Left lung (tissue), 14 donors: ENCODE measurements at regions of chr19 and their contacts with region 1.

Region 1: GRCh38 chr19:18408053-18408476 is 10.6 kb upstream of the LRRC25 start:
- DNase-seq: peak in 1 of 4 donors; percentile 89
- ATAC-seq: peak; percentile 78
- H3K4me3 ChIP-seq: no peak overlapping the region
- H3K27ac ChIP-seq: no peak overlapping the region
- H3K4me1 ChIP-seq: peaks cover 0 to 26% of the 10 kb centered on the region in 2 donors
- H3K27me3 ChIP-seq: no peaks in the 10 kb centered on the region
- CTCF ChIP-seq: peak; percentile 41 to 63

Region 2: DNA sequence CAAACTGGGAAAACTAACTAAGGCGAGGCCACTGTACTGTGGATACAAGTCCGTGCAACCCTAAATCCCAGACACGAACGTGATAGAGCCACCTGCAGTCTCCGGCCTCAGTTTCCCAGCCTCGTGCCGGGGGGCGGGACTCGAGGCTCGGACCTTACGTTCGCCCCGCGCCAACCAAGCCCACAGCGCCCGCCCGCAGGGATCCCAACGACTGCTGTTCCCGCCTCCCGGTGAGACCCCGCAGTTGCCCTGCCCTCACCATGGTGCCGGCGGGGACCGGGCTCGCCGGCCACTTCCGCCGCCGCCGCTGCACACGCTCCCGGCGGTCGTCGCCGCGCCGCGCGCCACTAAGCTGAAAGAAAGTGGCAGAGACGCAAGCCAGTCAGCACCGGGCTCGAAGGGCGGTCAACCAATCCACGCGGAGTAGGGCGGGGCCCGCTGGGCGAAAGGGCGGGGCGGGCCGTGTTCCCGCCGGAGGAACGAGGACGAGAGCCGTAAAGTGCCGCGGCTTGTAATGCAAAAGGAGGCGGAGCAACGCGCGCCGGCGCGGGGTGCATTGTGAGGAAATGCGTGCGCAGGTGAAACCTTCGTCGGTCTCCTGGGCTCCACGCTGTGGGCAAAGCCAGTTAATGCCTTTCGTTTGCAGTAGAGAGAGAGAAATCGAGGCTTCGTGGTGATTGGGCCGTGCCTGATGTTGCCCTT is 85.2 kb before region 1 on chr19 and contains the start of gene LSM4:
- intact Hi-C with region 1: no loop called
- DNase-seq: peak; percentile 94 to 98 (median 98)
- ATAC-seq: peak; percentile 94
- H3K4me3 ChIP-seq: peak within 1 kb of the TSS; percentile 58 to 81
- H3K27ac ChIP-seq: peak within 1 kb of the TSS; percentile 81 to 91
- H3K4me1 ChIP-seq: peaks cover 32 to 60% of the 10 kb centered on the region in 2 donors
- H3K27me3 ChIP-seq: no peaks in the 10 kb centered on the region
- CTCF ChIP-seq: no peak
- polyA plus RNA-seq, gene LSM4: 72.7 to 95.5 (median 78.7) TPM

Region 3: DNA sequence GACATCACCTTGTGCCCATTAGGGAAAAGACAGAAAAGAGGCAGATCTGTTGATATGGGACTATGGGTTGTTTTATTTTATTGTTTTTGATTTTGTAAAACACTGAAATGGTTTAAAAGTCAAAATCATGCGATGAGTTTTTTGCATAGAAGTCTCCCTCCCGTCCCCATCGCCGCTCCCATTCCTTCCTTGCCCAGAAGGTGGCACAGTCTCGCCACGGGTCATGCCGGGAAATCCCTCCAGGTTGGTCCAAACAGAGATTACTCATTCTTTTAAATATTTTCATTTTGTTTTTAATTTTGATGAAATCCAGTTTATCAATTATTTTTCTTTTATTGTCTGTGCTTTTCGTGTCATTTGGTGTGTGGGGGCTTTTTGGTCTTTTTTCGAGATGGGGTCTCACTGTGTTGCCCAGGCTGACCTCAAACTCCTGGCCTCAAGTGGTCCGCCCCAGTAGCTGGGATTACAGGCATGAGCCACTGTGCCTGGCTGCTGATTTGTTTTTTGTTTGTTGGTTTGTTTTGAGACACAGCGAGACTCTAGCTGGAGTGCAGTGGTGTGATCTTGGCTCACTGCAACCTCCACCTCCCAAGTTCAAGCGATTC is 58.4 kb before region 1 on chr19:
- intact Hi-C with region 1: loop called (anchors 5 to 10 kb)
- DNase-seq: peak in 3 of 4 donors; percentile 46 to 89 (median 64)
- ATAC-seq: peak; percentile 91
- H3K4me3 ChIP-seq: no peak overlapping the region
- H3K27ac ChIP-seq: no peak overlapping the region
- H3K4me1 ChIP-seq: peaks cover 0 to 8% of the 10 kb centered on the region in 2 donors
- H3K27me3 ChIP-seq: no peaks in the 10 kb centered on the region
- CTCF ChIP-seq: peak; percentile 69 to 85